WTC11 (cell line): ENCODE measurements at regions of chr3 and their contacts with region 1.

Region 1: DNA sequence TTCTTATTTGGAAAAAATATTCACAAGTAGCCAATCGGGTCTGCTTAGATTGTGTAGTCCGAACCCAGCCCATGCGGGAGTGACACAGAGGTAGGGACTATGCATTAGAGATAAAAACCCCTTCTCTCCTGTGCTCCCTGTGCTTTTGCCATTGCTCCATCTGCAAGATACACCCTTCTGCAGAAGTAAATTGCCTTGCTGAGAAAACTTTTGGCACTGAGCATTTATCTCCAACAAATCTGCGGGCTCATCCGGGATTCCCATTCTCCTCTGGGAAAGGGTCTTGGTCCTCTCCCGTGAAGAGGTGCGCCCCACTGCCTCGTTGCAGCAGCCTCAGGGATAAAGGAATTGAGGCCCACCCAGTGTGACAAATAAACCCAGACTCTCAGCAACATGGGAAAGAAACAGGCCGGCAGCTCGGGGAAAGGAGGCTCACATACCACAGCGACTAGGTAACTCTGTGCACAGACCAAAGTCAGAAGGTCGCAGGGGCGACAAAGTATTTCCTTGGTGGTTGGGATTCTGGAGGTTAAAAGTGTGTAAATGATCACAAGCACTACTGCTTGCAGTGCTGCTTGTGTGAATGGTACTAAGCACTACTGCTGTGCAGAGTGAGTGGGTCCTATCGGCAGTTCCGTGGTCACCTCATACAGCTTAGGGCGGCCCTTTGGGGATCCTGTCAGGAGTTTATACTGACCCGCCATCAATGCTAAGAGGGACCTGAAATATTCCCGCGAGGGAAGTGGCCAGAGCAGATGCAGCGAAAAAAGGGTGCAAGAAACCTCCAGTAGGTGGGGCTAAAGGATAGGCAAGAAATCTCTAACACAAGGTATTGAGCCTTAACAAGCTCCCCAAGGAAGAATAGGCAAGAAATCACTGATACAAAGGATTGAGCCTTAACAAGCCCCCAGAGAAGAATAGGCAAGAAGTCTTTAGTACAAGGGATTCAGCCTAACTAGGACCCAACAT is 54.3 kb downstream of the GSK3B start:
- DNase-seq: peak; percentile 47
- ATAC-seq: peak; percentile 86
- H3K4me3 Mint-ChIP-seq: no peak overlapping the region
- H3K27ac Mint-ChIP-seq: peak overlapping the region; percentile 41; the same call in 1 of the 2 replicates
- H3K4me1 Mint-ChIP-seq: peaks cover 48% of the 10 kb centered on the region
- H3K27me3 Mint-ChIP-seq: no peaks in the 10 kb centered on the region
- CTCF ChIP-seq: peak; percentile 59; the same call in 1 of the 2 replicates

Region 2: GRCh38 chr3:119628816-119629445 is 411.0 kb before region 1 on chr3:
- CTCF ChIA-PET with region 1: no interaction called
- POLR2A ChIA-PET with region 1: no interaction called
- DNase-seq: no peak
- ATAC-seq: no peak
- H3K4me3 Mint-ChIP-seq: no peak overlapping the region
- H3K27ac Mint-ChIP-seq: no peak overlapping the region
- H3K4me1 Mint-ChIP-seq: peaks cover 20% of the 10 kb centered on the region
- H3K27me3 Mint-ChIP-seq: no peaks in the 10 kb centered on the region; the same call in 1 of the 2 replicates
- CTCF ChIP-seq: no peak

Region 3: GRCh38 chr3:119891944-119892721 is 147.8 kb before region 1 on chr3:
- CTCF ChIA-PET with region 1: interaction called, 10 read pairs
- POLR2A ChIA-PET with region 1: no interaction called
- DNase-seq: peak; percentile 15
- ATAC-seq: peak; percentile 82
- H3K4me3 Mint-ChIP-seq: no peak overlapping the region; the same call in 1 of the 2 replicates
- H3K27ac Mint-ChIP-seq: no peak overlapping the region
- H3K4me1 Mint-ChIP-seq: peaks cover 2% of the 10 kb centered on the region; the same call in 1 of the 2 replicates
- H3K27me3 Mint-ChIP-seq: no peaks in the 10 kb centered on the region; the same call in 1 of the 2 replicates
- CTCF ChIP-seq: peak; percentile 56